ENCODE measurements at regions of chr19 and their contacts with region 1.

Region 1: GRCh38 chr19:47713046-47714021 is at the start of gene EHD2:
- DNase-seq: peak; percentile 76
- H3K27ac ChIP-seq: peak within 1 kb of the TSS; percentile 99
- CTCF ChIP-seq: peak; percentile 89

Region 2: DNA sequence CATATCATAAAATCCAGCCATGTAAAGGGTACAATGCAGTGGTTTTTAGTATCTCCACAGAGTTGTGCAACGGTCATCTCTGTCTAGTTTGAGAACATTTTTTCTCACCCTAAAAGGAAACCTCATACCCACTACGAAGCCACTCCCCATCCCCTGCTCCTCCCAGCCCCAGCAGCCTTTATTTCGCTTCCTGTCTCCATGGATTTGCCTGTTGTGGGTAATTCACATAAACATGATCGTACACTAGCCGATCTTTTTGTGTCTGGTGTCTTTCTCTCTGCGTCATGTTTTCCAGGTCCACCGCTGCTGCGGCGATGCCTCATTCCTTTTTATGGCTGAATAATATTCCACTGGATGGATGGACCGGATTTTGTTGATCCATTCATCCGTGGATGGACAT is 75.8 kb before region 1 on chr19:
- CTCF ChIA-PET with region 1: no interaction called
- POLR2A ChIA-PET with region 1: no interaction called
- DNase-seq: no peak
- H3K27ac ChIP-seq: peak overlapping the region; percentile 49
- CTCF ChIP-seq: no peak

Region 3: DNA sequence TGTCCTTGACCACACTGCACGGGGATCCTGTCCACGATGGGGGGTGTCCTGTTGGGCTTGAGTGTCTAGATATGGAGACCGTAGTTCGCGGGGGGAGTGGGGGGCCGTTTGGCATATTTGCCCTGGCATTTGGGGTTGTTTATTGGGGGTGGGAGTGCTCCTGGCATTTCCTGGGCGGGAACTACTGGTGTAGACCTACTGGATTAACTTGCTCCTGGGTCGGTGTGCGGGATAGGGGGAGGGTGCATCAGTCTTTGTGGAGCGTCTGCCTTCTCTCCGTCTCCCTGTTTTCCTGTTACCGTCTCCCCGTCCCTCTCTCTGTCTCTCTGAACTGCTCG is 65.6 kb before region 1 on chr19:
- CTCF ChIA-PET with region 1: no interaction called
- POLR2A ChIA-PET with region 1: no interaction called
- DNase-seq: no peak
- H3K27ac ChIP-seq: peak overlapping the region; percentile 81
- CTCF ChIP-seq: no peak

Region 4: GRCh38 chr19:47658431-47659348 is 54.6 kb before region 1 on chr19:
- CTCF ChIA-PET with region 1: no interaction called
- POLR2A ChIA-PET with region 1: no interaction called
- DNase-seq: no peak
- H3K27ac ChIP-seq: no peak overlapping the region
- CTCF ChIP-seq: no peak

Region 5: DNA sequence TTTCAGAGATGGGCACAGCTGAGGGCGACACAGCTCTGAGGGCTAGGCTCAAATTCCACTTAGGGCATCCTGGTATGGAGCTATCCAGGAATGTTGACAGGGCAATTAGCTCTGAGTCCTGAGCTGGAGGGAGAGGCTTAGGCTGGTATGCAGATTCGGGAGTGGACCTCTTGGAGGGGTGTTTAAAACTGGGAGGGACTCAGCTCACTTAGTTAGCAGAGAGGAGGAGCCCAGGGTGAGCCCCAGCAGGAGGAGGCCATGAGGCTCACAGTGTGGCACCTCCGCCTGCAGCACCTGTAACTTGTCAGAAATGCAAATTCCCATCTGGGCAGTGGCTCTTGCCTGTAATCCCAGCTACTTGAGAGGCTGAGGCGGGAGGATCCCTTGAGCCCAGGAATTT is 21.8 kb after region 1 on chr19:
- CTCF ChIA-PET with region 1: interaction called, 25 read pairs
- POLR2A ChIA-PET with region 1: interaction called, 3 read pairs
- DNase-seq: no peak
- H3K27ac ChIP-seq: peak overlapping the region; percentile 99
- CTCF ChIP-seq: no peak

Region 6: GRCh38 chr19:47745010-47745901 is 31.9 kb after region 1 on chr19 and contains the start of gene NOP53:
- CTCF ChIA-PET with region 1: interaction called, 59 read pairs
- POLR2A ChIA-PET with region 1: interaction called, 4 read pairs
- DNase-seq: peak; percentile 89
- H3K27ac ChIP-seq: peak within 1 kb of the TSS; percentile 99
- CTCF ChIP-seq: no peak

Region 7: DNA sequence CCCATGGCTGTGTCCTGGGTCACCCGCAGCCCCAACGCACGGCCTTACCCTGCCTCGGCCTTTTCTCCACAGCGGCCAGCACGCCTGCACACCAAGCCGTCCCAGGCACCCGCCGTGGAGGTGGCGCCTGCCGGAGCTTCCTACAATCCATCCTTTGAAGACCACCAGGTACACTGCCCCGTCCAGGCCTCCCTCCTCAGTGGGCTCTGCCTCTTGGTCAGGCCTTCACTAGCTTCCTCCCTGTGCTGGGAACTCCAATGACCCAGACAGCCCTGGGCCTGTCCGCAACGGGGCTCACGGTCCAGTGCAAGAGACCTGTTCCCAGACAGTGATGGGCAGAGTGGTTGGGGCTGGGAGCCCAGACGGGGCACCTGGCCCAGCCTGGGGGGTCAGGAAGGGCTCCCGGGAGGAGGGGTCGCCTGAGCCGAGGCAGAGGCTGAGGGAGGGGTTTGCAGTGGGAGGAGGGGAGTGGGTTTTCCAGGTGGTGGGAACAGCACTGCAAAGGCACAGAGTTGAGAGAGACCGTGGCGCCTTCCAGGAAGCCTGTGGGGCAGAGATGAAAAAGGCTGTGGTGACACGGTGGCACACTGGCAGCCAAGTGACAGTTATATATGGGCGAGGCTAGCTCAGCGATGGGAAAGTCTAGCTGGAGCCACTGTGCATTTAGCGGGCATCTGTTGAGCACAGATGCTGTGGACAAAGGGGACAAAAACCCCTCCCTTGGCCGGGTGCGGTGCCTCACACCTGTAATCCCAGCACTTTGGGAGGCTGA is 39.3 kb after region 1 on chr19:
- CTCF ChIA-PET with region 1: interaction called, 10 read pairs
- POLR2A ChIA-PET with region 1: interaction called, 6 read pairs
- DNase-seq: no peak
- H3K27ac ChIP-seq: peak overlapping the region; percentile 12; the same call in 1 of the 2 replicates
- CTCF ChIP-seq: no peak

Measured in RWPE1 (cell line).